ENCODE measurements at regions of chr22 and their contacts with region 1.

Region 1: DNA sequence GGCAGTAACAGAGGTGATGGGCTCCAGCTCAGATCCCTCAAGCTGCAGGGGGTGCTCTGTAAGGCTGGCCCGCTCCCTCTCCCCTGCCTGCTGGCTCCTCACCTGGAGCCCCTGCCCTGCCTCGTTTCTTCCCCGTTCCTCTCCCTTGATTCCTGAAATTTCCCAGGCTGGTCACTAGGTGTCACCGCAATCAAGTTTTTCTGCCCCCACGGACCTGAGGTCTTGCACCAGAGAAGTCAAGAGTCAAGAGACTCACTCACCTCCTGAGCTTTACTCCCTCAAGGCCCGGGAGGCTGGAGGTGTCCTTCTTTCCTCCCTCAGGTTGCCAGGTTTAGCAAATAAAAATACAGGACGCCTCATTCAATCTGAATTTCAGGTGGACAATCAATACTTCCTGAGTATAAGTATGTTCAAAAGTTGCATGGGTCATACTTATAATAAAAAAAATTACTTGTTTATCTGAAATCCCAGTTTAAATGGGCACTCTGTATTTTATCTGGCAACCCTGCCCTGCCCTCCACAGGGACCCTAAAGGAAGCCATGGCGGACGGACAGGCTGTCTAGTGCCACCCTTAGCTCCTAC is 69.2 kb downstream of the SCUBE1 start:
- H3K4me3 Mint-ChIP-seq: no peak overlapping the region
- H3K27ac Mint-ChIP-seq: no peak overlapping the region
- H3K4me1 Mint-ChIP-seq: peaks cover 11% of the 10 kb centered on the region
- H3K27me3 Mint-ChIP-seq: peaks cover 5% of the 10 kb centered on the region

Region 2: DNA sequence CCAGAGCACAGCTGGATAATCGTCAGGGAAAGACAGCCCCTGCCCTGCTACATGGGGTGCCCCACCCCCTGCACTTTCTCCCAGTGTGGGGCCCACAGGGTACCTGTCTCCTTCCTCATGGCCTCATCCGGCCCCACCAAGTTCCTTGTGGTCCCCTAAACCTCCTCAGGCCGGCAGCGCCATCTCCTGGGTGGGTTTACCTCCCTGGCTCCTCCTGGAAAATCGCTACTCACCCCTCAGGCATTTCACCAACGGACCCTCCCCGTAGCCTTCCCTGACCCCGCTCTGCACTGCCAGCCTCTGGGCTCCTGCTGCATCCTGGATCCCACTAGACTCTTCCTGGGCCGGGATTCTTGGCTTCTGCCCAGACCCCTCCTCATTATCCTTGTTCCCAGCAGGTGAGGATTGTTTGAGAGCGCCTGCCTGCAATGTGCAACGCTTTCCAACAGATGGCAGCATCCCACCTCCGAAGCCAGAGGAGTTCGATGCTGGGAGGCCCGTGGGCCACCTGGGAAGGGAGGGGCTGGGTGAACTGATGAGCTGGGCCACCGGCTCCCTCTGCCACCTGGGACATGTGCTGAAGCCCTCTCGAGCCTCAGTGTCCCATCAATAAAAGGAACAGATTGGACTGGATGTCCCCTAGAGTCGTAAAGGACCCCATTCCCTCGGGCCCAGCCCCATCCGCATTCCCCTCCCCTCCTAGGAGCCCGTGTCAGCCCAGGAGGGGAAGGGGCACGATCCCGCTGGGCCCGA is 42.8 kb before region 1 on chr22:
- intact Hi-C with region 1: no loop called
- H3K4me3 Mint-ChIP-seq: no peak overlapping the region
- H3K27ac Mint-ChIP-seq: no peak overlapping the region
- H3K4me1 Mint-ChIP-seq: peaks cover 5% of the 10 kb centered on the region
- H3K27me3 Mint-ChIP-seq: peaks cover 8% of the 10 kb centered on the region

Region 3: DNA sequence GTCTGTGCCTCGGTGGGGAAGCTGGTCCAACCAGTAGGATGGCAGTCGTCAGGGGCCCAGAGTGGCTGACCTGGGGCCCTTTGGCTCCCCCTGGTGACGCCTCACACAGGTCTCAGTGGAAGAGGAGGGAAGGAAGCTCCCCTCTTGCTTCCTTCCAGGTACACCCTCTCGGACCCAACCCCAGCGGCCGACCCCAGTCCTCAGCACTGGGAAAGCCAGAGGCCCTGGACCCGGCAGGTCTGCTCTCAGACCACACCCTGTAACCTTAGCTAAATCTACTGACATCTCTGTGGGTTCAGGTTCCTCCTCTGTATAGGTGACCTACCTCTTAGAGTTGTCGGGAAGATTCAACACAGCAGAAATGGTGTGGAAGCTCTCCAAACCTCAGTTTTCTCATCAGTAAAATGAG is 72.5 kb after region 1 on chr22:
- intact Hi-C with region 1: loop called (anchors 1 kb)
- H3K4me3 Mint-ChIP-seq: no peak overlapping the region
- H3K27ac Mint-ChIP-seq: no peak overlapping the region
- H3K4me1 Mint-ChIP-seq: peaks cover 49% of the 10 kb centered on the region
- H3K27me3 Mint-ChIP-seq: peaks cover 31% of the 10 kb centered on the region

Region 4: GRCh38 chr22:43435851-43436811 is 162.1 kb after region 1 on chr22:
- intact Hi-C with region 1: no loop called
- H3K4me3 Mint-ChIP-seq: no peak overlapping the region
- H3K27ac Mint-ChIP-seq: no peak overlapping the region
- H3K4me1 Mint-ChIP-seq: no peaks in the 10 kb centered on the region
- H3K27me3 Mint-ChIP-seq: peaks cover 9% of the 10 kb centered on the region